Activated CD8-positive, alpha-beta T cell treated with anti-CD3 and anti-CD28 coated beads for 36 hours (primary cell): ENCODE measurements at regions of chr7 and their contacts with region 1.

Region 1: GRCh38 chr7:105691733-105692564 is 110.7 kb upstream of the EFCAB10 start:
- DNase-seq: peak; percentile 88
- ATAC-seq: peak; percentile 61
- H3K4me3 Mint-ChIP-seq: peak overlapping the region; percentile 90
- H3K27ac Mint-ChIP-seq: peak overlapping the region; percentile 95
- H3K4me1 Mint-ChIP-seq: peaks cover 38% of the 10 kb centered on the region
- H3K27me3 Mint-ChIP-seq: no peaks in the 10 kb centered on the region
- CTCF ChIP-seq: no peak

Region 2: DNA sequence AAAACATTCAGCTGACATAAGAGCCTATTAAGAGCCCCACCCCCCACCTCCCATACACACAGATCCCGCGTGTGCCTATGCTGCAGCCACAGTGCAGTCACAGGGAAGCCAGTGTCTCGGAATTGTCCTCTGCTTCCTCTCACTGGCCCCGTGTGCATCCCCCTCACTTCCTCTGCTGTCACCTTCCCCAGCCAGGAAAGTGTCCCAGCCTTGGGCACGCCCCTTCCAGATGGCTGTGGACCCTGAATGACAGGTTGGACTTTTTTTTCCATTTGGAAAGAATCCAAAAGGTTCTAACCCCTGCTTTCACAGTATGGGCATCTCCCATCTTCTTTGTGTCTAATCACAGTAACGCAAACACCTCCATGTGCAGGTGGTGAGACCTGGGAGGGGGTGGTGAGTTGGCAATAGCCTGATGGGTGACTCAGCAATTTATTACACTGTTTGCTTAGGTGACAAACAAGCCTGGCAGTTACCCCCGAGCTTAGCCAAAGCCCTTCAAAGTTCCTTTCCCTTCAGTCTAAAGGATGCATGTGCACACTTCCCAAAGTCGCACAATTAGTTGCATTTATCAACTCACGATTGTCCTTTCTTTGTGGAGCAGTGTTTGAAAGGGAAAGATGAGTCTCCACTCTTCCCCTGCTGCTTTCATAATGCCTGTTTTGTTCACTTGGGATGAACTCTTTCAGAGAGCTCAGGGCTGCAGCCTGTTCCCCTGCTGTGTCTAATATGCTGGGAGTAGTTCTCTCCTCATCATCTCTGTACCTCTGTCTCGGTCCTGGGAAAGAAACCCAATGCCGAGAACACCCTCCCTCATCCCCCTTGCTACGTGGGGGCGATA is 43.2 kb before region 1 on chr7:
- CTCF ChIA-PET with region 1: no interaction called
- POLR2A ChIA-PET with region 1: no interaction called
- intact Hi-C with region 1: no loop called
- DNase-seq: no peak
- ATAC-seq: no peak
- H3K4me3 Mint-ChIP-seq: no peak overlapping the region
- H3K27ac Mint-ChIP-seq: no peak overlapping the region
- H3K4me1 Mint-ChIP-seq: peaks cover 5% of the 10 kb centered on the region
- H3K27me3 Mint-ChIP-seq: no peaks in the 10 kb centered on the region
- CTCF ChIP-seq: no peak

Region 3: DNA sequence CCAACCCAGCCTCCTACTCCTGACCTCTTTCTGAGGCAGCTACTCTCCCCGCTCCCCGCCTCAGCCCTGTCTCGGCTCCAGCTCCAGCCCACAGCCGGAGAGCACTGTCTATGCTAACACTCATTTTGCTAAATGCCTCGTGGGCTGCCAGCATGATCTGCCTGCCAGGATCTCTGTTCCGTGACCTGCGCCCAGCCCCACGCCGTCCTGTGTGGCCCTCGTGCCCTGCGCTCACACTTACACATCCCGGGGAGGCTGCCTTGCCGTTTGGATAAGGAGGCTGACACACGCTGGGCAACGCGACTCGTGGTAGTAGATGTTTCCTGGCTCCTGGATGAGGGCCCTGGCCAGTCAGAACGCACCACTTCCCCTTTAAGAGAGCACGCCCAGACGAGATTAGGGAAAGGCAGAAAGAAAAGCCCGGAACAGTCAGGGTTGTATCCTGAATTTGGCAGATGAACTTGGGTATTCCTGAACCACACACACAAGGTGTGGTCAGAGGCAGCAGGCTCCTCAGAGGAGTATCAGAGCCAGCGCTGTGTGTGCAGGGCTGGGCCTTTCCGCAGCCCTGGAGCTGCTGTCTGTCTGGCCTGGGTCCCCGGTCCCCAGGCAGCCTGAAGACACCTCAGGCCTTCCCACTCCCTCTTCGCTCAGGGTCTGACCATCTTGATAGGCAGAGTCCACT is 13.0 kb before region 1 on chr7:
- CTCF ChIA-PET with region 1: interaction called, 9 read pairs
- POLR2A ChIA-PET with region 1: interaction called, 17 read pairs
- intact Hi-C with region 1: no loop called
- DNase-seq: peak; percentile 18
- ATAC-seq: no peak
- H3K4me3 Mint-ChIP-seq: peak overlapping the region; percentile 71
- H3K27ac Mint-ChIP-seq: peak overlapping the region; percentile 89
- H3K4me1 Mint-ChIP-seq: peaks cover 57% of the 10 kb centered on the region
- H3K27me3 Mint-ChIP-seq: no peaks in the 10 kb centered on the region
- CTCF ChIP-seq: no peak

Region 4: GRCh38 chr7:105816266-105816828 is 124.4 kb after region 1 on chr7:
- CTCF ChIA-PET with region 1: no interaction called
- POLR2A ChIA-PET with region 1: no interaction called
- intact Hi-C with region 1: no loop called
- DNase-seq: no peak
- ATAC-seq: no peak
- H3K4me3 Mint-ChIP-seq: no peak overlapping the region
- H3K27ac Mint-ChIP-seq: no peak overlapping the region
- H3K4me1 Mint-ChIP-seq: peaks cover 7% of the 10 kb centered on the region
- H3K27me3 Mint-ChIP-seq: no peaks in the 10 kb centered on the region
- CTCF ChIP-seq: no peak